ENCODE measurements at regions of chr4 and their contacts with region 1.

Region 1: GRCh38 chr4:98609934-98610333 is 48.5 kb downstream of the TSPAN5 start:
- DNase-seq: no peak
- ATAC-seq: no peak
- H3K4me3 Mint-ChIP-seq: no peak overlapping the region
- H3K27ac Mint-ChIP-seq: peak overlapping the region; percentile 70
- H3K4me1 Mint-ChIP-seq: peaks cover 98% of the 10 kb centered on the region
- H3K27me3 Mint-ChIP-seq: no peaks in the 10 kb centered on the region
- CTCF ChIP-seq: no peak

Region 2: DNA sequence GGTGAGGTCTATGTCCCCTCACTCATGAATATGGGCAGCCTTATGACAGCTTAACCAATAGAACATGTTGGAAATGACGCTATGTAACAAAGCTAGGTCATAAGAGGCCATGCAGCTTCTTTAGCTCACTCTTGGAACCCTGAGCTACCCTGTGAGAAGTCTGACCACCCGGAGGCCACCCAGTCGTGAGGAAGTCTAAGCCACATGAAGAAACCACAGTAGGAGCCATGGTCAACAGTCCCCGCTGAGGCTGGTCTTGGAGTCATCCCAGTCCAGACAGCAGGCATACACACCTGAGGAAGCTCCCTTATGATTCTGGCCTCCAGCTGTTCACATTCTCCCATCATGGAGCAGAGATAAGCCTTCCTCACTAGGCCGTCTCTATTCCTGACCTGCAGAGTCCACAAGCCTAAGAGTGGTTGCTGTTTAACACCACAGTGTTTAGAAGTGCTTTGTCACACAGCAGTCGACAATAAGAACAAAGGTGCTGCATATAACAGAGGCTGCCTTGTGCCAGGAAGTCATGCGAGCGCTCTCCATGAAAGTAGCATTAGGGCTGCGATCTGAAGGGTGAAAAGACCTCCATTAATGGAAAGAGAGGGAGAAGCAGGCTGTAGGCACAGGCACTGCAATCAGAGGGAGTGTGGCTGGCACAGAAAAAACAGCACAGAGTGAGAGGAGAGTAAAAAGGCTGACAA is 10.3 kb after region 1 on chr4:
- CTCF ChIA-PET with region 1: no interaction called
- POLR2A ChIA-PET with region 1: no interaction called
- DNase-seq: no peak
- ATAC-seq: peak; percentile 77
- H3K4me3 Mint-ChIP-seq: no peak overlapping the region
- H3K27ac Mint-ChIP-seq: peak overlapping the region; percentile 72
- H3K4me1 Mint-ChIP-seq: peaks cover 54% of the 10 kb centered on the region
- H3K27me3 Mint-ChIP-seq: no peaks in the 10 kb centered on the region
- CTCF ChIP-seq: no peak

Region 3: DNA sequence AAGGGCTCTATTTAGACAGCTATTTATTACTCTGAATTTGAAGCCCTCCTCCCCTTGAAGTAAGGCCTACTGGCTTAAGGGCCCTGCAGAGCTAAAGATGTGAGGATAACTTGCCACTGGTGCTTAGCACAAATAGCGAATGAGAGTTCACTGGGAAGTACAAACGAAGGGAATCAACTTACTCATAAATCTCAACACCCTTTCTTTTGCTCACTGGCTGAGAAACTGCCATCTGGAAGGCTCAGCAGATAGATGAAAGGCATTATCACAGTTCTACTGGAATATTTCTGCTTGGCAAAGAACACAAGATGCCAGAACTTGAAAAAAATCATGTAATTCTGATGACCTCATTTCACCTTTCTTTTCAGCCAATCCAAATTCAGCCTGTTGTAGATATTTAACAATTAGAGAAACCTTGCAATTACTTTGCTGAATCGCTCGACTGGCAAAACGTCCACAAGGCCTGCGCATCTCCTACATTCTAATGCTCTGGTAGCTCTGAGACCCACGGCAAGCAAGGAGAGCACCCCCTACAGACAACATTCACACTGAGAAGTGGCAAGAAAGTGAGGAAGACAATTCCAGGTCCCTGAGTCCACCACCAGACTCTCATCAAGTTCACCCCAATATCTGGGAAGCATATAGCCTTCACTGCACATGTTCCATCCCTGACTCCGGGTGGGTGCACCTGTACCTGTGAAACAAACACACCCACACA is 21.0 kb after region 1 on chr4:
- CTCF ChIA-PET with region 1: interaction called, 11 read pairs
- POLR2A ChIA-PET with region 1: no interaction called
- DNase-seq: no peak
- ATAC-seq: peak; percentile 60
- H3K4me3 Mint-ChIP-seq: no peak overlapping the region
- H3K27ac Mint-ChIP-seq: no peak overlapping the region
- H3K4me1 Mint-ChIP-seq: peaks cover 44% of the 10 kb centered on the region
- H3K27me3 Mint-ChIP-seq: no peaks in the 10 kb centered on the region
- CTCF ChIP-seq: no peak

Measured in WTC11 (cell line).